ENCODE measurements at regions of chr12 and their contacts with region 1.

Region 1: GRCh38 chr12:7892186-7892980 is 19.7 kb upstream of the SLC2A14 start:
- DNase-seq: peak in 2 of 3 donors; percentile 16 to 24
- H3K4me3 ChIP-seq: no peak overlapping the region
- H3K4me3 Mint-ChIP-seq: no peak overlapping the region
- H3K27ac ChIP-seq: peak overlapping the region in 1 of 2 donors; percentile 31
- H3K27ac Mint-ChIP-seq: peak overlapping the region; percentile 3 to 89 (median 69)
- H3K4me1 ChIP-seq: peaks cover 28% of the 10 kb centered on the region in 2 donors
- H3K4me1 Mint-ChIP-seq: peaks cover 25% of the 10 kb centered on the region
- H3K27me3 ChIP-seq: no peaks in the 10 kb centered on the region
- H3K27me3 Mint-ChIP-seq: peaks cover 0 to 3% (median 0%) of the 10 kb centered on the region in 3 donors
- CTCF ChIP-seq: no peak

Region 2: GRCh38 chr12:7859552-7859951 is 32.8 kb before region 1 on chr12:
- intact Hi-C with region 1: loop called in 1 of 2 experiments (anchors 2 kb)
- DNase-seq: no peak
- H3K4me3 ChIP-seq: no peak overlapping the region
- H3K4me3 Mint-ChIP-seq: no peak overlapping the region
- H3K27ac ChIP-seq: no peak overlapping the region
- H3K27ac Mint-ChIP-seq: peak overlapping the region in 2 of 7 donors; percentile 11 to 13
- H3K4me1 ChIP-seq: peaks cover 0 to 6% of the 10 kb centered on the region in 2 donors
- H3K4me1 Mint-ChIP-seq: peaks cover 26% of the 10 kb centered on the region
- H3K27me3 ChIP-seq: no peaks in the 10 kb centered on the region
- H3K27me3 Mint-ChIP-seq: peaks cover 0 to 9% (median 2%) of the 10 kb centered on the region in 3 donors
- CTCF ChIP-seq: no peak

Region 3: DNA sequence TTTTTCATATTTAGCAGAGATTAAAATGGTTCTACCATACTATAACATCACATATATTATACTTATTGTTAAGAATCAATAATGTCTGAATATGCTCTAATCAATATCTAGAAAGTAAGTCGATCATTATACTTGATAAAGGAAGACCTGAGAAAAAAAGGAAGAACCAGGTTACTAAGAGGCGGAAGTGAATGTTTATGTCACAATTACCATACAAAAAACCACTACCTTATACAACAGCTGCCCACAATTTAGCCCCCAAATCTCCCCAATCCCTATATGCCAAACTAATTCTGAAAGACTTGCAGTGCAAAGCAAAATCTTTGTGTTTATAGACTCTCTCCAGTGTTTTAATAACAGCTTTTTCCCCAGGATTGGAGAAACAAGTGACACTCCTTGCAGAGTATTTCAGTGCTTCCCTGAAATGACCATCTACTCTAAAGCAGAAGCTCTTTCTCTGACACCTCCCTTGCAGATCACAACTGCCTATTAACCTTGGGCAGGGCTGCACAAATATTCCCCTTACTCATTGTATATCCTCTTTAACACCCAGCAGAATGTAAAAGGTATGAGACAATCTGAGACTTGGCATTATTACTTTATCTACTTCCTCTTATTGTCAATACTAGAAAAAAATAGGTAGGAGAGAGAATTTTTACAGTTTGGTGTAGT is 56.3 kb after region 1 on chr12:
- intact Hi-C with region 1: no loop called
- DNase-seq: peak; percentile 65 to 85 (median 73)
- H3K4me3 ChIP-seq: peak overlapping the region in 1 of 3 experiments; percentile 32
- H3K4me3 Mint-ChIP-seq: peak overlapping the region in 1 of 2 donors; percentile 68
- H3K27ac ChIP-seq: peak overlapping the region; percentile 45 to 49
- H3K27ac Mint-ChIP-seq: peak overlapping the region; percentile 82 to 96 (median 94)
- H3K4me1 ChIP-seq: peaks cover 24% of the 10 kb centered on the region in 2 donors
- H3K4me1 Mint-ChIP-seq: peaks cover 16% of the 10 kb centered on the region
- H3K27me3 ChIP-seq: no peaks in the 10 kb centered on the region
- H3K27me3 Mint-ChIP-seq: no peaks in the 10 kb centered on the region
- CTCF ChIP-seq: no peak

Measured in CD14-positive monocyte (primary cell).